Activated CD4-positive, alpha-beta memory T cell treated with anti-CD3 and anti-CD28 coated beads for 36 hours (primary cell): ENCODE measurements at regions of chr4 and their contacts with region 1.

Region 1: DNA sequence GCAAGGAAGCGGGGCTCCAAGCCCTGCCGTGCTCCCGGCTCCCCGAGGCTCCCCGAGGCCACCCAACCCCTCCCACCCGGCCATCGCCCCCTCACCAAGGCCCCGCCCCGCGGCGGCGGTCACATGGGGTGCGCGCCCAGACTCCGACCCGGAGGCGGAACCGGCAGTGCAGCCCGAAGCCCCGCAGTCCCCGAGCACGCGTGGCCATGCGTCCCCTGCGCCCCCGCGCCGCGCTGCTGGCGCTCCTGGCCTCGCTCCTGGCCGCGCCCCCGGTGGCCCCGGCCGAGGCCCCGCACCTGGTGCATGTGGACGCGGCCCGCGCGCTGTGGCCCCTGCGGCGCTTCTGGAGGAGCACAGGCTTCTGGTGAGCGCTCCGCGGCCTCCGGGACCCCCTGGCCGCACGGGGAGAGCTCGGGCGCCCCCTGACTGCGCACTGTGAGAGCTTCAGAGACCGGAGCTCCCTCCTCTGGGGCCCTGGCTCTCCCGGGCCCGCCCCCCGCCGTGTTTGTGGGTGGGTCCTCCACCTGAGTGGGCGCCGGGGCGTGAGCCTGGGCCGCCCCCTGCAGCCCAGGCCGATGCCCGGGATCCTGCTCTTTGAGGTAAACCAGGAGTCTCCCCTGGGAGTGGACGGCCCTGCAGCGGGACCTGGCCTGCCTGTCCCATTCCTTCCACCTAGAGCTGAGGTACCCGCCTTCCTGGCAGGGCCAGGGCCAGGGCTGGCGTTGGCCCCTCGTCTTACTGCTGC is at the start of gene IDUA:
- DNase-seq: peak; percentile 92
- H3K4me3 Mint-ChIP-seq: peak within 1 kb of the TSS; percentile 88
- H3K27ac Mint-ChIP-seq: peak within 1 kb of the TSS; percentile 72
- H3K4me1 Mint-ChIP-seq: peaks cover 21% of the 10 kb centered on the region
- H3K27me3 Mint-ChIP-seq: no peaks in the 10 kb centered on the region
- total RNA-seq, gene IDUA: 9.0 to 10.1 TPM

Region 2: GRCh38 chr4:742742-743311 is 244.2 kb before region 1 on chr4:
- CTCF ChIA-PET with region 1: interaction called, 25 read pairs
- POLR2A ChIA-PET with region 1: no interaction called
- intact Hi-C with region 1: loop called (anchors 2 kb)
- DNase-seq: peak; percentile 85
- H3K4me3 Mint-ChIP-seq: no peak overlapping the region
- H3K27ac Mint-ChIP-seq: no peak overlapping the region
- H3K4me1 Mint-ChIP-seq: no peaks in the 10 kb centered on the region
- H3K27me3 Mint-ChIP-seq: no peaks in the 10 kb centered on the region

Region 3: GRCh38 chr4:973431-974397 is 13.3 kb before region 1 on chr4 and contains the start of gene DGKQ:
- CTCF ChIA-PET with region 1: no interaction called
- POLR2A ChIA-PET with region 1: no interaction called
- intact Hi-C with region 1: loop called (anchors 1 kb)
- DNase-seq: peak; percentile 92
- H3K4me3 Mint-ChIP-seq: peak within 1 kb of the TSS; percentile 55
- H3K27ac Mint-ChIP-seq: no peak within 1 kb of the TSS
- H3K4me1 Mint-ChIP-seq: peaks cover 8% of the 10 kb centered on the region
- H3K27me3 Mint-ChIP-seq: no peaks in the 10 kb centered on the region
- total RNA-seq, gene DGKQ: 11.1 to 11.4 TPM

Region 4: DNA sequence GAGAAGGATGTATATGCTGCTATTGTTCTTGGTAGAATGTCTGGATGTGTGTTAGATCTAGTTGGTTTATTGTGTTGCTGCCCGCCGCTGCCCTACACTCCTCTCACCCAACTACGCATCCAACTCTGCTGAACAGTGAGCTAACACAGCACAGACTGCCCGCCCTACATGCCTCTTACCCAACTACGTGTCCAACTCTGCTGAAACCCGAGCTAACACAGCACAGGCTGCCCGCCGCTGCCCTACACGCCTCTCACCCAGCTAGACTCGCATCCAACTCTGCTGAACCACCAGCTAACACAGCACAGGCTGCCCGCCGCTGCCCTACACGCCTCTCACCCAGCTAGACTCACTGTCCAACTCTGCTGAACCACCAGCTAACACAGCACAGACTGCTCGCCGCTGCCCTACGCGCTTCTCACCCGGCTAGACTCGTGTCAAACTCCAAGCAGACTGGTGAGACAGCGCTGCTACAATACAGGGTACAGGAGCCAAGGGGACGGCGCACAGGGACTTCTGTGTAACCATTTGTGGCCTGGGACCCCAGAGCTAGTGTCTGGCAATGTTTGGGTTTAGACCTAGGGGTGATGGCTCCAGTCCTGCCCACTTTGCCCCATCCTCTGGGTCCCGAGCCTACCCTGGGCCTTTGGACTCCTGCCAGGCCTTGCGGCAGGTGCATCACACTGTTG is 273.5 kb after region 1 on chr4:
- CTCF ChIA-PET with region 1: no interaction called
- POLR2A ChIA-PET with region 1: no interaction called
- intact Hi-C with region 1: no loop called
- DNase-seq: no peak
- H3K4me3 Mint-ChIP-seq: no peak overlapping the region
- H3K27ac Mint-ChIP-seq: no peak overlapping the region
- H3K4me1 Mint-ChIP-seq: peaks cover 34% of the 10 kb centered on the region
- H3K27me3 Mint-ChIP-seq: no peaks in the 10 kb centered on the region